ENCODE measurements at regions of chr4 and their contacts with region 1.

Region 1: DNA sequence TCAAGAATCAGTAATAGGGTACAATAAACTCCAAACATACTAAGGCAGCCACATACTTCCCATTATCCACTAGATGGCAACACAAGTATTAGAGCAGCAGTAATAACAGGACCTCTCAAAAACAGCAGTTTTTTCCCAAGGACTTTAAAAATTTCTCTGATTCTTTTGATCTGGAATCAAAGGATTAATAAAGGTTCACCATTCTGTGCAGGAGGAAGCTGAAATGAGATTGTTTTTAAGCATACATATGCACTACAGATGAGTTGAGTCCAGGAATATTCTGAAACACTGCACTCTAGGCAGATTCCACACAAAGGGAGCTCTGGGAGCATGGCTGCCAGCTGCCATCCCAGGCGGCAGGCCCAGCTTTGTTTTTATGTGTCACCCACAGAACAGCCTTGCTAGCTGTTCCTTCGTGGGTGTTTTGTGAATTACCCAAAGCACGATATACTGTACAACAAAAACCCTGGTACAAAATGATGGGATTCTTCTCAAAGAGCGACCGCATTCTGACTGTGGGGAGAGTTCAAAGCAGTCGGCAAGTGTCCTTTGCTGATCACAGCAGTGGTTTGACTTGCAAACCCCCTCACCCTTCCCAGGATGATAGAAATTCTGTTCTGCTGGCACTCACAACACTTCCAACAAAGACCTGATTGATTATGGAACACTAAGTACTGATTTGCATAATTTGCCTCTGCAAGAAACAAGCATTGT is 61.0 kb downstream of the STX18 start:
- DNase-seq: no peak
- ATAC-seq: peak; percentile 50; the same call in 2 of the 3 replicates
- H3K4me3 ChIP-seq: no peak overlapping the region
- H3K27ac ChIP-seq: no peak overlapping the region
- H3K4me1 ChIP-seq: no peaks in the 10 kb centered on the region
- H3K27me3 ChIP-seq: no peaks in the 10 kb centered on the region
- CTCF ChIP-seq: peak; percentile 31 to 37 (median 31); a peak in 3 of 6 replicates
- EP300 ChIP-seq: no peak
- POLR2A ChIP-seq: no peak
- RAD21 ChIP-seq: peak; percentile 45; the same call in 1 of the 2 replicates

Region 2: DNA sequence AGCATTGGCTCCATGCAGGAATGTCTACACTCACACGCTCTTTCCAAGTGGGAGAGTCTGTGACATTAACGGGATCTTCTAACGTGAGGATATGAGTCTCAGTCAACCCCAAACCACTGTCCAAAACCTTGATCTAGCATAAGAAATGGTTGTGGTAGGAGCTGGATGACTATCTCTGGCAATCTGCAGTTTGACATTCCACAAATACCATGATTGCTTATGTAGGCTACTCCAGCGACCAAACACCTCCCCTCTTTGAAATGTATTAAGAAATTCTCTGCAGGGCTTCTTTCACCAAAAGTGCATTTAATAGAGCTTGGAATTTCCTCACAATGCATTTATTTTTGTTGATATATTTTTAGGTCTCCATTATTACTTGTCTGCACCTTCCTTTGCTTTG is 75.1 kb after region 1 on chr4:
- CTCF ChIA-PET with region 1: no interaction called
- POLR2A ChIA-PET with region 1: no interaction called
- RAD21 ChIA-PET with region 1: no interaction called
- SMC1A ChIA-PET with region 1: no interaction called
- in situ Hi-C with region 1: no loop called
- intact Hi-C with region 1: no loop called
- DNase-seq: no peak
- ATAC-seq: no peak
- H3K4me3 ChIP-seq: no peak overlapping the region
- H3K27ac ChIP-seq: no peak overlapping the region
- H3K4me1 ChIP-seq: no peaks in the 10 kb centered on the region
- H3K27me3 ChIP-seq: no peaks in the 10 kb centered on the region
- CTCF ChIP-seq: no peak
- EP300 ChIP-seq: no peak
- POLR2A ChIP-seq: no peak
- RAD21 ChIP-seq: no peak

Region 3: GRCh38 chr4:4888695-4889094 is 407.9 kb after region 1 on chr4:
- CTCF ChIA-PET with region 1: interaction called, 4 read pairs
- POLR2A ChIA-PET with region 1: no interaction called
- RAD21 ChIA-PET with region 1: no interaction called
- SMC1A ChIA-PET with region 1: no interaction called
- in situ Hi-C with region 1: loop called (anchors 5 kb)
- intact Hi-C with region 1: no loop called
- DNase-seq: no peak
- ATAC-seq: no peak
- H3K4me3 ChIP-seq: no peak overlapping the region
- H3K27ac ChIP-seq: no peak overlapping the region
- H3K4me1 ChIP-seq: no peaks in the 10 kb centered on the region
- H3K27me3 ChIP-seq: peaks cover 0 to 1% of the 10 kb centered on the region in 2 experiments; a peak in 2 of 4 replicates
- CTCF ChIP-seq: no peak
- EP300 ChIP-seq: no peak
- POLR2A ChIP-seq: no peak
- RAD21 ChIP-seq: no peak